ENCODE measurements at regions of chr22 and their contacts with region 1.

Region 1: DNA sequence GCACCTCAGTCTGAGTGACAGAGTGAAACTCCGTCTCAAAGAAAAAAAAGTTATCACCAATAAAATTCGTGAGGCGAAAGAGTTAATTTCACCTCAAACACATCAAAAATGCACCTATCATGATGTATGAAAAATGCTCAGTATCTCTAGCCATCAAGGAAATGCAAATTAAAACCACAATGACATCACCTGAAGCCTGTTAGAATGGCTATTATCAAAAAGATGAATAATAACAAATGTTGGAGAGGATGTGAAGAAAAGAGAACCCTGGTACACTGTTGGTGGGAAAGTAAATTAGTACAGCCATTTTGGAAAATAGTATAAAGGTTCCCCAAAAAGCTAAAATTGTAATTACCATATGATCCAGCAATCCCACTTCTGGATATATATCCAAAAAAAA is 23.6 kb downstream of the CHEK2 start:
- DNase-seq: no peak
- ATAC-seq: no peak
- H3K4me3 Mint-ChIP-seq: no peak overlapping the region
- H3K27ac Mint-ChIP-seq: no peak overlapping the region
- H3K4me1 Mint-ChIP-seq: no peaks in the 10 kb centered on the region
- H3K27me3 Mint-ChIP-seq: no peaks in the 10 kb centered on the region
- CTCF ChIP-seq: no peak

Region 2: DNA sequence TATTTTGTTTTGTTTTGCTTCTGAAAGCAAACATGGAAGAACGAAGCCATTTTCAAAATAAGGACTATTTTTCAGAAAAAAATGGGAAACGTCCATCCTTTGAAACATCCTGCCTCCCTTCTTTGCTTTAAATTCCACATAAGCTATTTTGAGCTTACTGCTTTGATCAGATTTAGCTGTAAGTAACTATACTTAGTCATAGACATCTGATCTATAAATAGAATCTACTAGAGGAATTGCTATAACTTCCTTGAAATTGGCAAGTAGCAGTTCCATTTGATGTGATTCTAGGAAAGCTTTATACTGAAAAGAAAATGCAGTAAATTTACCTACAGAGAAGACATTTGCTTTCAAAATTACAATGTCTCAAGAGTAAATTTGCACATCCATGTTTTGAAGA is 344.2 kb before region 1 on chr22:
- CTCF ChIA-PET with region 1: no interaction called
- POLR2A ChIA-PET with region 1: no interaction called
- intact Hi-C with region 1: no loop called
- DNase-seq: no peak
- ATAC-seq: no peak
- H3K4me3 Mint-ChIP-seq: no peak overlapping the region
- H3K27ac Mint-ChIP-seq: no peak overlapping the region
- H3K4me1 Mint-ChIP-seq: no peaks in the 10 kb centered on the region
- H3K27me3 Mint-ChIP-seq: peaks cover 2% of the 10 kb centered on the region
- CTCF ChIP-seq: no peak

Region 3: GRCh38 chr22:28703436-28703835 is 14.6 kb before region 1 on chr22:
- CTCF ChIA-PET with region 1: no interaction called
- POLR2A ChIA-PET with region 1: interaction called, 12 read pairs
- intact Hi-C with region 1: no loop called
- DNase-seq: no peak
- ATAC-seq: no peak
- H3K4me3 Mint-ChIP-seq: no peak overlapping the region
- H3K27ac Mint-ChIP-seq: peak overlapping the region; percentile 53
- H3K4me1 Mint-ChIP-seq: peaks cover 41% of the 10 kb centered on the region
- H3K27me3 Mint-ChIP-seq: no peaks in the 10 kb centered on the region
- CTCF ChIP-seq: no peak

Region 4: DNA sequence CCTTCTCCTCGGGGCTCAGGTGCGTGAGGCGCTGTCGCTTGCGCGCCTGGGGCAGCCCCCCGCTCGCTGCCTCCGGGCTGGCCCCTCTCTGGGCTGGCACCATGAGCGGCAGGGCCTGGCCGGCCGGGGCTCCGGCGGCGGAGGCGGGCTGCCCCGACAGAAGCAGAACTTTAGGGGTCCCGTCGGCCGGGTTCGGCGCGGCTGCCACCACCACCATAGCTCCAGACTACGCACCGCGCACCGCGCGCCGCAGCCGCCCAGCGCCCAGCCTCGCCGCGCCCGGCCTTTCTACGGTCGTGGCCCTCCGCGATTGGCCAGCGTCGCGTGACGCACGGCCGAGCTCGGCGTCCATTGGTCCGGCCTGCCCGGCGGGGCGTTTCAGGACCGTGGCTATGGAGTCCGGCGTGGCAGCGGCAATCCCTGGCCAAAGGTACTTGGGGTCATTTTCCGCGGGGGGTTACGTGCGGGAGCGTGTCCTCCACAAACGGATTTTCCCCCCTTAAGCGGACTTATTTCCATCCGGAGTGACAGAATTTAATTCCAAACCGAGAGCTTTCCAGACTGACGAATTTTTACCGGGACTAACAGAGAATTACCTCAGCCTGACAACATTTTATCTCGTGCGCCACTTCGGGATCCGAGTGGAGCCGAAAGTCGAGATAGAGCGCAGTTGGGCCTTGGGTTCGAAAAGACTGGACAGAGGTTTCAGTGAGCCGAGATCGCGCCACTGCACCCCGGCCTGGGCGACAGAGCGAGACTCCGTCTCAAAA is 82.4 kb after region 1 on chr22 and contains the start of gene XBP1:
- CTCF ChIA-PET with region 1: no interaction called
- POLR2A ChIA-PET with region 1: no interaction called
- intact Hi-C with region 1: no loop called
- DNase-seq: peak; percentile 85
- ATAC-seq: peak; percentile 93
- H3K4me3 Mint-ChIP-seq: peak within 1 kb of the TSS; percentile 98
- H3K27ac Mint-ChIP-seq: peak within 1 kb of the TSS; percentile 98
- H3K4me1 Mint-ChIP-seq: peaks cover 56% of the 10 kb centered on the region
- H3K27me3 Mint-ChIP-seq: no peaks in the 10 kb centered on the region
- CTCF ChIP-seq: no peak
- total RNA-seq, gene XBP1: 57.7 and 67.3 TPM in 2 replicates